Panc1 (cell line): ENCODE measurements at regions of chr3 and their contacts with region 1.

Region 1: DNA sequence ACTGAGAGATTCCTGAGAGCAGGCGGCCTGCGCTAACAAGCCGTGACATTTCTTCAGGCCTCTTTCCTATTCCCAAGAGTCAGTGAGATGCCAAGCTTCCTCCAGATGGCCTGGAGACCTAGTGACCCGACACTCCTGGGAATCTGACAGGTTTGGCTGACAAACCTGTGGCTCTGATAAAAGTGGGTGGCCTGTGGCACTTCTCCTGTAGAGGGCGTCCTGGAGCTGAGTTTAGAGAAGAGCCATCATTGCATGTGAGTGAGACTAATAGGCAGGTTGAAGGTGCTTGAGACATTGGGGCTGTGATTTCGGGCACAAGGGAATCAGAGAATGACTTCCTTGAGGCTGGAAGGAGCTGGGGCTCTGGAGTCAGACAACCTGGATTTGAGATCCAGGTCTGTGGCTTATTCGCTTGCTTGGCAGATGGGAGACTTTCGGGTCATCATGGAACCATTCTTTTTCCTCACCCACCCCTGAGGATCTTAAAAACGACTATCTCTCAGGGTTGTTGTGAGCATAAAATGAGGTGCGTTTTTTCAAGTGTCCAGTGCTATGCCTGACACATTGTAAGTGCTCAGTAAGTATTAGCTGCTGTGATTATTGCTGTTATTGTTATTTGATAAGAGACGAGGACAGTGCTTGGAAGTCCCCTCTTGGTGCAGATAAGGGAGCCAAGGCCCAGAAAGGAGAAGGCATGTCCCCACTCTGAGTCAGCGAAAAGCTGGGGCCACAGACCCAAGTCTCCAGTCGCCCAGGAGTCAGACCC is 77.2 kb downstream of the SCN10A start:
- DNase-seq: no peak
- ATAC-seq: no peak
- H3K4me3 ChIP-seq: no peak overlapping the region
- H3K27ac ChIP-seq: no peak overlapping the region
- H3K4me1 ChIP-seq: no peaks in the 10 kb centered on the region
- H3K27me3 ChIP-seq: no peaks in the 10 kb centered on the region; the same call in 1 of the 2 replicates
- CTCF ChIP-seq: peak; percentile 70

Region 2: DNA sequence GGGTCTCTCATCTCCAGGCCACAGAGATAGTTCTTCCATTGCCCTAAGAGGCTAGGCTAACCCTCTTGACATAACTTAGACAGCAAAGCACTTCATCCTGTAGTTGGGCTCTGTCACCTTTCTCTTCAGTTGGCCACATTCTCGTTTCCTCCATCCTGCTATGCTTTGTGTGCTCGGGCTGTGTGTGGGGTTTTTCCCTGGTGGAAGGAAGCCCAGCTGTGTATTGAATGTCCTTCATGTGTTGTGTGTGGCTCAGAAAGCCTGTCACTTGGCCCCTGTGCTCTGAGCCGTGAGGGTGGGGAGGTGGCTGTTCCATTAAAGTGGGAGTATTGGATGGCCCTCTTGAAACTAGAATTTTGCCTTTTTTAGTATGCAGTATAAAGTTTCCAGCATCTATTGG is 251.5 kb before region 1 on chr3:
- CTCF ChIA-PET with region 1: no interaction called
- POLR2A ChIA-PET with region 1: no interaction called
- in situ Hi-C with region 1: no loop called
- intact Hi-C with region 1: no loop called
- DNase-seq: no peak
- ATAC-seq: no peak
- H3K4me3 ChIP-seq: no peak overlapping the region
- H3K27ac ChIP-seq: no peak overlapping the region
- H3K4me1 ChIP-seq: no peaks in the 10 kb centered on the region
- H3K27me3 ChIP-seq: no peaks in the 10 kb centered on the region
- CTCF ChIP-seq: no peak

Region 3: GRCh38 chr3:38843898-38844297 is 105.1 kb after region 1 on chr3:
- CTCF ChIA-PET with region 1: interaction called, 3 read pairs
- POLR2A ChIA-PET with region 1: no interaction called
- in situ Hi-C with region 1: no loop called
- intact Hi-C with region 1: loop called (anchors 2 kb)
- DNase-seq: no peak
- ATAC-seq: no peak
- H3K4me3 ChIP-seq: no peak overlapping the region
- H3K27ac ChIP-seq: no peak overlapping the region
- H3K4me1 ChIP-seq: no peaks in the 10 kb centered on the region
- H3K27me3 ChIP-seq: no peaks in the 10 kb centered on the region
- CTCF ChIP-seq: peak; percentile 42

Region 4: GRCh38 chr3:39079530-39079929 is 340.7 kb after region 1 on chr3:
- CTCF ChIA-PET with region 1: no interaction called
- POLR2A ChIA-PET with region 1: no interaction called
- in situ Hi-C with region 1: no loop called
- intact Hi-C with region 1: no loop called
- DNase-seq: no peak
- ATAC-seq: no peak
- H3K4me3 ChIP-seq: no peak overlapping the region
- H3K27ac ChIP-seq: no peak overlapping the region
- H3K4me1 ChIP-seq: no peaks in the 10 kb centered on the region
- H3K27me3 ChIP-seq: no peaks in the 10 kb centered on the region
- CTCF ChIP-seq: no peak

Region 5: DNA sequence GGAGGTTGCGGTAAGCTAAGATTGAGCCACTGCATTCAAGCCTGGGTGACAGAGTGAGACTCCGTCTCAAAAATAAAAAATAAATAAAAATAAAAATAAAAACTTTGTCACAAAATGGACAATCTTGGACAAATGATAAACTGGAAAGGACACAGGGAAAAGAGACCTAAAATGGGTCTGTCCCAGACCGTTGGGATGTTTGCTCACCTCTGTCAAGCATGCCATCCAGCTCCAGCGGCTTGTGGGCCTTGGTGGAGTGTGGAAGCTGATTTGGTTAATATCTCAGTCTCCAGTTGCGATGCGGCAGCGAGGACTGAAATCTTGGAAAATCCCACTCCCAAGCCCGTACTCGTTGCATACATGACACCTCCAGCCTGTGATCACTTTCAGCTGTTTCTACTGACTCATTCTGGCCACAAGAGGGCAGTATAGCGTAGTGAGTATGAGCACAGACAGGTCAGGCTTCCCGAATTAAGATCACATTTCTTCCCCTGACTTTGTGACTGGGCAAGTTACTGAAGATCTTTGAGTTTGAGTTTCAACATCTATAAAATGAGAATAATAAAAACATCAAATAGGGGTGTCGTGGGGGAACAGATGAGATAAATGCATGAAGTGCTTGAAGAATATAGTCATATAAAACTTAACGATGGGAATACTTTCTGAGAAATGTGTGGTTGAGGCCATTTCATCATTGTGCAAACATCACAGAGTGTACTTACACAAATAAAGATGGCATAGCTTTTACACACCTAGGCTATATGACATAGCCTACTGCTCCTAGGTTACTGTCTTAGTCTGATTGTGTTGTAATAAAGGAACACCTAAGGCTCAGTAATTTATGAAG is 709.0 kb after region 1 on chr3:
- CTCF ChIA-PET with region 1: no interaction called
- POLR2A ChIA-PET with region 1: no interaction called
- in situ Hi-C with region 1: no loop called
- intact Hi-C with region 1: no loop called
- DNase-seq: peak; percentile 57
- ATAC-seq: peak; percentile 96
- H3K4me3 ChIP-seq: no peak overlapping the region
- H3K27ac ChIP-seq: no peak overlapping the region
- H3K4me1 ChIP-seq: no peaks in the 10 kb centered on the region
- H3K27me3 ChIP-seq: no peaks in the 10 kb centered on the region
- CTCF ChIP-seq: peak; percentile 82